Heart left ventricle (tissue), 16 donors: ENCODE measurements at regions of chr12 and their contacts with region 1.

Region 1: DNA sequence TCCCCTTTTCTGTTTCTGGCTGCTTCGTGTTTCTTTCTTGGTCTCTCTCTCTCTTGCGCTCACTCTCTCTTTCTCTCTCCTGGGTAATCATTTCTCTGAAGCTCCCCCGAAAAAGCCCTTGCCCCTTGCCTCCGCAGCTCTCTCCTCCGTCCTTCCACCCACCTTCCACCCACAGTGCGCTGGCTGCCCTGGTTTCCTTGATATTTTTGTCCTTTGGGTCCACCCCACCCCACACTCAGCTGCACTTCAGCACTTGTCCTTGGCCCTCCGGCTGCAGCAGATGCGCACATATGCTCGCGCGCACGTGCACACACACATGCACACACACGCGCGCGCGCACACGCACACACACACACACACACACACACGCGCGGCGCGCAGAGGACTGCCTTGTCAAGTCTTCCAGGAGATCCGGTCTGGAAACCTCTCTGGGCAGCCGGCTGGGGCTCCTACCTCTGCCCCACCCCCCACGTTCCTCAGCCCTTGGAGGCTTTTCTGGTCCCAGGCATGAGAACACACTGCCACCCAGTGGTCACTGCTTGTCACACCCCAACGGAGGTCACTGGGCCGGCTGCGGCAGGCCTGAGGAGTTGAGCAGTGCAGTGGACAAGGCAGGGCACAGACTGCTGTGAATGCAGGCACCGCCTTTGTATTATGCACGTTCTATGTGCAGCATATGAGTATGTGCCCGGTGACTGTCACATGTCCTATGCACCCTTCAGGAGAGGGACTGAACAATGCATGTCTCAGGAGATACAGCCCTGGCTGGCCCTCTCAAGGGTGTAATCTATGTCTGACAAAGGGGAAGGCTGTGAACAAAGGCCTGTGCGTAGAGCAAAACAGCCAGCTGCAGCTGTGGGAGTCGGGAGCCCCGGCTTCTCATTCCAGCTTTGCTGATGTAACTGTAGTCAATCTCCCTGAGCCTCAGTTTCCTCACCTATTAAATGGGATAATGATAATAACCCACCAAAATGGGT is 6.5 kb downstream of the LAG3 start:
- DNase-seq: peak; percentile 94 to 96 (median 96)
- ATAC-seq: peak; percentile 93 to 97 (median 97)
- H3K4me3 ChIP-seq: peak overlapping the region in 11 of 12 donors; percentile 23 to 62 (median 47)
- H3K27ac ChIP-seq: peak overlapping the region in 10 of 12 donors; percentile 56 to 82 (median 66)
- H3K4me1 ChIP-seq: peaks cover 0 to 21% (median 14%) of the 10 kb centered on the region in 12 donors
- H3K27me3 ChIP-seq: peaks cover 0 to 21% (median 0%) of the 10 kb centered on the region in 9 donors
- CTCF ChIP-seq: peak; percentile 93 to 99 (median 96)
- POLR2A ChIP-seq: peak in 1 of 2 donors; percentile 27

Region 2: DNA sequence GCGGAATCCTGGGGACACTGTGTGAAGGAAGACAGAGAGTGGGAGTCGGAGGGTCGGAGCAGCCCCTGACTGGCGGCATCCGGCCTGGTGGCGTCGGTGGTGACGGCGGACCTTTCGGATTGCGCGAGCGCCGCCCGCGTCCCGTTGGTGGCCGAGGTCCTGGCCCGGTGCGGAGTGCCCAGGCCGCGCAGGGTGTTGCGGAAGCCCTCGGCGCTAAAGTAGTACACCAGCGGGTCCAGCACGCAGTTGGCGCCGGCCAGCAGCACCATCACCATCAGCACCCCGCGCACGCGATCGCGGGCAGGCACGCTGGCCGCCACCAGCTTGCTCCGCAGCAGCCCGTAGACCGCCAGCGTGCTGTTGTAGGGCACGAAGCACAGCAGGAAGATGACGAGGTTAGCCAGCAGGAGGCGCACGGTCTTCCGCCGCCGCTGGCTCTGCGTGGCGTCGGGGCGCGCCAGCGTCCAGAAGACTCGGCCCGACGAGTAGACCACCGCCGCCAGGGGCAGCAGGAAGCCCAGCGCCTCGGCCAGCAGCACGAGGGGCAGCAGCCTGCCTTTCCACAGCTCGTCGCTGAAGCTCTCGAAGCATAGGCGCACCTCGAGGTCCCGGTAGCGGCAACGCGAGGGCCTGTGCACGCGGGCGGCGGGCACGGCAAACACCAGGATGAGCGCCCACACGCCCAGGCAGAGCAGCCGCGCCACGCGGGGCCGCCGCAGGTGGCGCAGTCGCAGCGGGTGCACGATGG is 158.6 kb before region 1 on chr12:
- intact Hi-C with region 1: loop called in 3 of 10 experiments (anchors 2 to 10 kb)
- DNase-seq: peak in 3 of 5 donors; percentile 51 to 87 (median 53)
- ATAC-seq: peak in 3 of 4 donors; percentile 22 to 48 (median 45)
- H3K4me3 ChIP-seq: peak overlapping the region in 10 of 12 donors; percentile 3 to 43 (median 28)
- H3K27ac ChIP-seq: no peak overlapping the region
- H3K4me1 ChIP-seq: peaks cover 0 to 40% (median 0%) of the 10 kb centered on the region in 12 donors
- H3K27me3 ChIP-seq: peaks cover 0 to 15% (median 0%) of the 10 kb centered on the region in 9 donors
- CTCF ChIP-seq: peak; percentile 29 to 68 (median 50)
- POLR2A ChIP-seq: no peak

Region 3: GRCh38 chr12:6735448-6736191 is 43.2 kb before region 1 on chr12:
- intact Hi-C with region 1: loop called in 9 of 10 experiments (anchors 1 to 5 kb)
- DNase-seq: peak; percentile 54 to 76 (median 67)
- ATAC-seq: peak; percentile 58 to 93 (median 91)
- H3K4me3 ChIP-seq: no peak overlapping the region
- H3K27ac ChIP-seq: peak overlapping the region in 9 of 12 donors; percentile 0 to 55 (median 34)
- H3K4me1 ChIP-seq: peaks cover 0 to 12% (median 0%) of the 10 kb centered on the region in 12 donors
- H3K27me3 ChIP-seq: no peaks in the 10 kb centered on the region
- CTCF ChIP-seq: peak; percentile 55 to 83 (median 72)
- POLR2A ChIP-seq: no peak

Region 4: DNA sequence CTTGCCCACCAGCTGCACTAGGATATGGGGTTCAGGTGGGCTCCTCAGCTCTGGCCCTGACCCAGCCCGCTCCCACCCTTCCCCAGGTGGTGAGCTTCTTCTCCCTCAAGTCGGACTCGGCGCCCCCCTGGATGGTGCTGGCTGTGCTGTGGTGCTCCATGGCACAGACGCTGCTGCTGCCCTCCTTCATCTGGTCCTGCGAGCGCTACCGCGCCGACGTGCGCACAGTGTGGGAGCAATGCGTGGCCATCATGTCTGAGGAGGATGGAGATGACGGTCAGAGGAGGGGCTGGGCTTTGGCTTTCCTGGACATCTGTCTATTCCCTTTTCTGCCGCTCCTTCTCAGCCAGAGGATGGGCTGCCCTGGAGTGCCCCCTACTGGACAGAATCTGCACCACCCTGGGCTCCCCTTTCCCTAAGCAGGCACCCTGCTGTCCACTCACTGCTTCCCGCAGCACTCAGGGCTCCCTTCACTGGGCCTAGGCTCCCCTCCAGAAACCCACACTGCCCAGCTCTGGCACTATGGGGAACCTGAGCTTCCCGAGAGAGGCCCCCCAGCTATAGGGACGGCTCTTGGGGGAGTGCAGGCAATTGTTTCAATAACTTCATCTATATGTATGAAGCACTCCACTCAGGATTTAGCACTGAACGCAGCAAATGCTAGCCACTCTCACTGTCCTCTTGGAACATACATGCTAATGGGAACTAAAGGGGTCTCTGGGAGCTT is 46.7 kb after region 1 on chr12:
- intact Hi-C with region 1: loop called in 3 of 10 experiments (anchors 2 to 10 kb)
- DNase-seq: peak; percentile 83 to 92 (median 86)
- ATAC-seq: peak; percentile 58 to 69 (median 60)
- H3K4me3 ChIP-seq: peak overlapping the region in 5 of 12 donors; percentile 5 to 36 (median 24)
- H3K27ac ChIP-seq: no peak overlapping the region
- H3K4me1 ChIP-seq: peaks cover 0 to 55% (median 27%) of the 10 kb centered on the region in 12 donors
- H3K27me3 ChIP-seq: peaks cover 0 to 21% (median 0%) of the 10 kb centered on the region in 9 donors
- CTCF ChIP-seq: peak; percentile 82 to 95 (median 91)
- POLR2A ChIP-seq: no peak

Region 5: GRCh38 chr12:6836851-6837250 is 58.0 kb after region 1 on chr12:
- intact Hi-C with region 1: no loop called
- DNase-seq: peak in 1 of 5 donors; percentile 19
- ATAC-seq: no peak
- H3K4me3 ChIP-seq: no peak overlapping the region
- H3K27ac ChIP-seq: no peak overlapping the region
- H3K4me1 ChIP-seq: peaks cover 0 to 37% (median 12%) of the 10 kb centered on the region in 12 donors
- H3K27me3 ChIP-seq: no peaks in the 10 kb centered on the region
- CTCF ChIP-seq: no peak
- POLR2A ChIP-seq: no peak